Right ventricle myocardium superior (tissue), 1 donor: ENCODE measurements at regions of chr20 and their contacts with region 1.

Region 1: GRCh38 chr20:1576641-1577040 is 19.1 kb upstream of the SIRPD start:
- DNase-seq: no peak
- ATAC-seq: no peak

Region 2: GRCh38 chr20:1397710-1398109 is 178.9 kb before region 1 on chr20:
- intact Hi-C with region 1: no loop called
- DNase-seq: no peak
- ATAC-seq: no peak

Region 3: GRCh38 chr20:1626528-1627249 is 50.0 kb after region 1 on chr20:
- intact Hi-C with region 1: loop called (anchors 5 kb)
- DNase-seq: no peak
- ATAC-seq: no peak

Region 4: GRCh38 chr20:1707588-1708449 is 131.2 kb after region 1 on chr20:
- intact Hi-C with region 1: no loop called
- DNase-seq: no peak
- ATAC-seq: no peak